Thyroid gland (tissue), 4 donors: ENCODE measurements at regions of chr15 and their contacts with region 1.

Region 1: DNA sequence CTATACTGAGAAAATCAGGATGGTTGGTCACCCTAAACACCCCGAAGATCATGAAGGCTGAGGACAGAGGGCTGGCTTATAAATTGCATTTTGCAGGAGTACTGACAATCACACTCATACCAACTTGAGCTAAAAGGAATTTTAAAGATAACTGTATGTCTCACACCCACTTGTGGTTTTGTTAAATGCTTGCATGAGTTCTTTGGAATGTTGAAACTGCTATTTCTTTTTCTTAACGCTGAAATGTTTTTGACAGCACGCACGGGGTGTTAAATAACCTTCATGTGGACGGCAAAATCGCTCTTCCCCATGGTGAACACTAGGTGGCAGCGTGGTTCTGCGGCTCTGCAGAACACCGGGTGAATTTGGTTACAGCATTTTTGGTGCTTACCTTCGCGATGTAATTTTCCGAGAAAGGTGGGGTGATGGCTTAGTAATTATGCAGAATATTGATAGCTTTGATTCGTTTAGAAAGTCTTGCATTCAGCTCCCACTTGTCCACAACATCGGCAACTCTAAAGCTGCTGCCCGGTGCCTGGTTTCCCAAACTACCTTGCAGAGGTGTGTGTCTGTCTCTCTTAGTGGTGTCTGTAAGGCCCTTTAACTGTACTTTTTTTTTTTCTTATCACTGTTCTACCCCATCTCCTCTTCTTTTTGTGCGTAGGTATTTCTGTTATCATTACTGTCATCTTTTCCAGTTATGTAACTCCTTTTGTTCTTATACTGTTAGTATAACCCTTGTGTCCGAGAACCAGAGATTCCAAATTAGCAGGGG is 51.7 kb downstream of the ARNT2 start:
- DNase-seq: peak; percentile 49 to 55
- H3K4me3 ChIP-seq: no peak overlapping the region
- H3K27ac ChIP-seq: no peak overlapping the region
- H3K4me1 ChIP-seq: peaks cover 2 to 3% of the 10 kb centered on the region in 2 donors
- H3K27me3 ChIP-seq: no peaks in the 10 kb centered on the region
- CTCF ChIP-seq: peak; percentile 71 to 94 (median 90)
- POLR2A ChIP-seq: no peak

Region 2: GRCh38 chr15:80418892-80419537 is 36.8 kb before region 1 on chr15:
- intact Hi-C with region 1: no loop called
- DNase-seq: peak; percentile 22 to 31
- H3K4me3 ChIP-seq: no peak overlapping the region
- H3K27ac ChIP-seq: no peak overlapping the region
- H3K4me1 ChIP-seq: peaks cover 6% of the 10 kb centered on the region in 2 donors
- H3K27me3 ChIP-seq: no peaks in the 10 kb centered on the region
- CTCF ChIP-seq: peak in 4 of 6 experiments; percentile 23 to 69 (median 46)
- POLR2A ChIP-seq: no peak

Region 3: DNA sequence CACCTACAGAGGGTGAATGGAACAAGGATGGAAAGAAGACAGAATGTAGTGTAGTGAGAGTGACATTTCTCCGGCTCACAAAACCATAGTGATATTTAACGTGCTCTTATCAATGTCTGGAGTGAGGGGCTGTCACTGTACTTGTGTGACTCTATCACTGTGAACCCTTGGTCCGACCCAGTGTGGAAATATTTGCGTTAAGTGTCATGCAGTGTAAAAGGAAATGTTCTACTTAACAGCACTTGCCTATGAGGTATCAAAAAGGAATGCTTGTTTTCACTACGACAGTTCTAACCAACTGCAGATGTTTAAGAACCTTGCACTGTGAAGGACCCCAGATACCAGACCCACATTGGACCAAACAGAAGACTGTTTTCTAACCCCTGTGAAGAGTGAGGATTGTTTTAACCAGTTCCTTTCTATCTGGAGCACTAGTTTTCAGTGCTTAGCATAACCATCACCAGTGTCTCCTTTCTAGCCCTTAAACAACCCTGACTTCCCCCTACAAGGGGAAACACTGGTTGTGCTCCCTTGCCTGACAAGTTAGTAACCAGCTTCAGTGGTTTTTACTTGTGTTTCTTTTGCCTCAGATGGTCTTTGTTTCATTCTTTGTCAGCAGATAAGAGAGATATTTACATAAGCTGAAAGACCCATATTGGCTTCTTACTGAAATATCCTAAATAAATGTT is 94.5 kb after region 1 on chr15:
- intact Hi-C with region 1: loop called (anchors 5 kb)
- DNase-seq: no peak
- H3K4me3 ChIP-seq: no peak overlapping the region
- H3K27ac ChIP-seq: no peak overlapping the region
- H3K4me1 ChIP-seq: peaks cover 24 to 25% of the 10 kb centered on the region in 2 donors
- H3K27me3 ChIP-seq: no peaks in the 10 kb centered on the region
- CTCF ChIP-seq: no peak
- POLR2A ChIP-seq: no peak

Region 4: DNA sequence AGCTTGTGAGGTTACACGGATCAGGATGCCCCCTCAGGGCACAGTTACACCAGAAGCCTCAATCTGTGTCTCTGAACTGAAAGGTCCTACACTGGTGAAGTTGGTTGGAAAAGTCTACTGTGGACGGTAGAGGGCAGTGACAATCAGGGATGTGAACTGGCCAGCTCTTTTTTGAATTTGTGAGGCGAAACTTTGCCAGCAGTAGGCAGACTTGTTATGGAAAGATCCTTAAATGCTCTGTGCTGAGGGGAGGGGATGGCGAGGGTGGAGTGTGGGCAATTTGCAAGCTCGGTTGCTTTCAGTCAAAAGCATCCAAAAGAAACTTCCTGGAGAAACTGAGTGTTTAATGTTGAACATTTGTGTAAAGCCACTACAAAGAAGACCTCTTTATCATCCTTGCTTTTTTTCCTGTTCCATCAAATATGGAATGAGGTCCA is 111.9 kb after region 1 on chr15:
- intact Hi-C with region 1: loop called (anchors 10 kb)
- DNase-seq: peak; percentile 71 to 74
- H3K4me3 ChIP-seq: no peak overlapping the region
- H3K27ac ChIP-seq: no peak overlapping the region
- H3K4me1 ChIP-seq: peaks cover 0 to 7% of the 10 kb centered on the region in 2 donors
- H3K27me3 ChIP-seq: no peaks in the 10 kb centered on the region
- CTCF ChIP-seq: peak; percentile 45 to 88 (median 76)
- POLR2A ChIP-seq: no peak

Region 5: GRCh38 chr15:80776420-80777045 is 320.7 kb after region 1 on chr15:
- intact Hi-C with region 1: loop called (anchors 5 kb)
- DNase-seq: peak; percentile 78 to 81
- H3K4me3 ChIP-seq: no peak overlapping the region
- H3K27ac ChIP-seq: no peak overlapping the region
- H3K4me1 ChIP-seq: peaks cover 18 to 38% of the 10 kb centered on the region in 2 donors
- H3K27me3 ChIP-seq: no peaks in the 10 kb centered on the region
- CTCF ChIP-seq: peak; percentile 65 to 87 (median 76)
- POLR2A ChIP-seq: no peak

Region 6: DNA sequence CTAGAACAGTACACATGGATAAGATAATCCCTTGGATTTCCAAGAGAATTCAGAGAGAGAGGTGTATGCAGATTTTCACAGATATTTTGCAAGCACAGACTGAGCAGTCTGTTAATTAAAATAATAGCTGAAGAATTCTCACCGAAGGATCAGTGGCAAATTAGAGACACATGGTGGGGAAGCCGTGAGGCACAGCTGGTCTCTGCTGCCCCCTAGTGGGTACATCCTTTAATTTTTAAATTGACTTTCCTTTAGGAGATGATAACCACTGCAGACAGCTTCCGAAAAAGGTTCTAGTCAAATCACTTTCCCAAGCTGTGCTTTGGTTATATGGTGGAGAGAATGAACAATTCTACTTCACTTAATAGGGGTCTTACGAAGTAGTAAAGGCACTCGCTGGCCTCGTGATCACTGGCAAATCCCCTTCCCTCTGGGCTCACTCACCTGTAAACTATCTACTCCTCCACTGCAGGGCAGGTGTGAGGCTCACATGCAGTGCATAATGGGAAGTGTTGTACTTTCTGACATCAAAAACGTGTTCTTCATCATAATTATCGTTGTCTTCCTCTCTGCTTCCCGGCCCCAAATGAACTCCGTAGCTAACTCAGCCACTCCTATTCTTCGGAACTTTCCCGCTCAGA is 514.3 kb after region 1 on chr15:
- intact Hi-C with region 1: loop called (anchors 5 kb)
- DNase-seq: peak; percentile 44 to 71
- H3K4me3 ChIP-seq: no peak overlapping the region
- H3K27ac ChIP-seq: no peak overlapping the region
- H3K4me1 ChIP-seq: peaks cover 22 to 32% of the 10 kb centered on the region in 2 donors
- H3K27me3 ChIP-seq: no peaks in the 10 kb centered on the region
- CTCF ChIP-seq: peak; percentile 43 to 83 (median 77)
- POLR2A ChIP-seq: no peak